Activated T-helper 2 cell treated with anti-CD3 and anti-CD28 coated beads, Interferon-gamma antibody, Interleukin-2, Interleukin-4, amounts not matched to agents 10 μg/mL and 5 μg/mL and 100 μg/mL, durations not matched to agents 14 hours and 24 hours and 36 hours (primary cell): ENCODE measurements at regions of chr5 and their contacts with region 1.

Region 1: DNA sequence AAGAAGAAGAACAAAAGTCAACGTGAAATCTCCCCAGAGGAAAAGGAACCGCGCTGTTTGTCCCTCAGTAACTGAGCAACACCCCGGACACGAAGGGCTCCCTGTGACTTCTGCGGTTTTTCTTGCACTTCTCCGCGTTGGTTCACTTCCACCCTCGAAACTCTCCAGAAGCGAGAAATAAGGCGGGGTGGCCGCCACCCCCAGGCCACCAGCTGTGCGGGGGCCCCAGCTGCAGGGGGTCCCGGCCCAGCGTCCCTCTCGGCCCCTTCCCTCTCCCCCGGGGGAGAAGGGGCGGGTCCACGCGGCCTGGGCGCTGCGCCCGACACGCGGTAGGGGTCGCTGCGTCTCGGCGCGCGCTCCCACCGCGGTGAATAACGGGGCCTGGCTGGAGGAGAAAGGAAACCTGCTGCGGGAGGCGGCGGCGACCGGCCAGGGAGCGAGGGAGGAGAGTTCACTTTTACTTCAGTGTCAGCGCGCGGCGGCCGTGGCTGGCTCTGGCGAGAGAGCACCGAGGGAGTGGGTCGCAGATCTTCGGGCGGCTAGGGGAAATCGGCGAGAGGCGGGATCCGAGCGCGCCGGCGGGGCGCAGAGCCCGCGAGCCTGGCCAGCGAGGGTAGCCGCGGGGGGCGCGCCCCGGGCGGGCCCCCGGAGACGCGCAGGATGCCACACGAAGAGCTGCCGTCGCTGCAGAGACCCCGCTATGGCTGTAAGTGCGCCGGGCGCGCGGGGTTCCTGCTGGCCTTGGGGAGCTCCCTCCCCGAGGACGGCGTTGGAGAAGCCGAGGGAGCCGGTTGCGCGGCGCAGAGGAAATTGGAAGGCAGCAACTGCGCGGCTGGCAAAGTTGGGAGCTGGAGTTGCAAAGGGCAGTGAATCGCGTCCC is at the start of gene IQGAP2:
- DNase-seq: peak; percentile 80
- H3K4me3 Mint-ChIP-seq: peak within 1 kb of the TSS; percentile 95
- H3K27ac Mint-ChIP-seq: peak within 1 kb of the TSS; percentile 94
- H3K4me1 Mint-ChIP-seq: peaks cover 43% of the 10 kb centered on the region
- H3K27me3 Mint-ChIP-seq: peaks cover 14% of the 10 kb centered on the region
- total RNA-seq, gene IQGAP2: 28.3 and 29.5 TPM in 2 replicates

Region 2: GRCh38 chr5:75566710-75567309 is 836.3 kb before region 1 on chr5:
- intact Hi-C with region 1: loop called (anchors 5 kb)
- DNase-seq: peak; percentile 30
- H3K4me3 Mint-ChIP-seq: peak overlapping the region; percentile 20
- H3K27ac Mint-ChIP-seq: peak overlapping the region; percentile 96
- H3K4me1 Mint-ChIP-seq: peaks cover 43% of the 10 kb centered on the region
- H3K27me3 Mint-ChIP-seq: no peaks in the 10 kb centered on the region

Region 3: DNA sequence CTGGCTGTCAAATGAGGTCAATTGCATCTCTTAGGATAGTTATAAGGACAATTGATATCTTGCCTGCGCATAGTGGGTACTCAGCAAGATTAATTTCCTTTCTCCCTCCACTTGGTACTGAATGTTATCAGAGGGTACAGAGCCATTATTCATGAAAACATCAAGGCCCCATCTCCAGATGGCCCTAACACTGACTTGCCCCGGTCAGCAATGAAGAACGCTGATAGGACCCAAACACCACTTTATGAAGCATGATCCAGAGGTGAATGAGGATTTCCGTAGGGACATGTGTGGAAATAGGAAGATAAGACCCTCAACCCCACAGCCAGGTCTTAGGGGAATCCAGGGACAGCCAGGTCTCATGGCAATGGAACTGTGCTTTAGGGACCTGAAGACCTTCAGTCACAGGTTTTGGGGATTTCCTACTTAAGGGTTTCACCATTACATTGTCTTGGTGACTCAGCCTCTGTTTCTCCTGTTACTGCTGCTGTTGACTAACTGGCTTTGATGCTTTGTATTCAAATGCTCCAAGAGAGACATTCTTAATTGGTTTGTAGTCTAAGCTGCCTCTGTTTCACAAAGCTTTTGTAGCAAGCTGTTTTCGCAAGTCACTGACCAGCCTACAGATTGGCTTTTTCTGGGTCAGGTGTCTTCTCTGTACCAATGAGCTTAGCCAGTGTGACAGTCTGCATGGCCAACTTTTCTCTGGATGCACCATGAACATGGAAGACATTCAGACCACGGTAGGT is 35.3 kb before region 1 on chr5:
- intact Hi-C with region 1: loop called (anchors 1 kb)
- DNase-seq: no peak
- H3K4me3 Mint-ChIP-seq: no peak overlapping the region
- H3K27ac Mint-ChIP-seq: peak overlapping the region; percentile 55
- H3K4me1 Mint-ChIP-seq: peaks cover 10% of the 10 kb centered on the region
- H3K27me3 Mint-ChIP-seq: peaks cover 2% of the 10 kb centered on the region

Region 4: GRCh38 chr5:76386360-76386759 is 16.8 kb before region 1 on chr5:
- intact Hi-C with region 1: no loop called
- DNase-seq: no peak
- H3K4me3 Mint-ChIP-seq: no peak overlapping the region
- H3K27ac Mint-ChIP-seq: no peak overlapping the region
- H3K4me1 Mint-ChIP-seq: peaks cover 28% of the 10 kb centered on the region
- H3K27me3 Mint-ChIP-seq: peaks cover 2% of the 10 kb centered on the region

Region 5: DNA sequence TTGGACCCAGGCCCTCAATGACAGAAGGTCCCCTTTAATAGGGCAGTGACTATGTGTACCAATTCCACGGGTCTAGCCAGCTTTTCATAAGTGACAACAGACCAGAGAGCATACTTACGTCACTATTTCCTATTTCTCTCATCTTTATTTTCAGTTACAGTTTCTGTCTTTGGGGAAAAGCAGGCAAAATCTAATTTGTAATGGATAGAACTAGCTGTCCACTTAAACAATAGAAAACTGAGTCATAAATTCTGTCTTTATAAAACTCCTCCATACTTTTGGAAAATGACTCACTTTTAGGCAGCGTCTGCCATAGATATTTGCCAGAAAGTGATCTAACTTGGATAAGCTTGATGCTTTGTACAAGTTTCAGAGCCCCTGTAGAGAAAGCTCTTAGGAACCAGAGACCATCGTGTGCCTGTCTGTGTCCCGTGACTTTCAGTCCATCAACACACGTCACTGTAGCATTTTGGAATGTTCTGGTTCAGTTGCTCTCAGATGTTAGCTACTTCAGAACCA is 118.2 kb after region 1 on chr5:
- intact Hi-C with region 1: loop called (anchors 1 kb)
- DNase-seq: no peak
- H3K4me3 Mint-ChIP-seq: peak overlapping the region; percentile 24
- H3K27ac Mint-ChIP-seq: peak overlapping the region; percentile 82
- H3K4me1 Mint-ChIP-seq: peaks cover 49% of the 10 kb centered on the region
- H3K27me3 Mint-ChIP-seq: no peaks in the 10 kb centered on the region

Region 6: GRCh38 chr5:76553251-76553650 is 150.1 kb after region 1 on chr5:
- intact Hi-C with region 1: no loop called
- DNase-seq: no peak
- H3K4me3 Mint-ChIP-seq: no peak overlapping the region
- H3K27ac Mint-ChIP-seq: no peak overlapping the region
- H3K4me1 Mint-ChIP-seq: peaks cover 43% of the 10 kb centered on the region
- H3K27me3 Mint-ChIP-seq: no peaks in the 10 kb centered on the region

Region 7: GRCh38 chr5:76641514-76642120 is 238.5 kb after region 1 on chr5:
- intact Hi-C with region 1: loop called (anchors 5 kb)
- DNase-seq: peak; percentile 37
- H3K4me3 Mint-ChIP-seq: no peak overlapping the region
- H3K27ac Mint-ChIP-seq: no peak overlapping the region
- H3K4me1 Mint-ChIP-seq: peaks cover 8% of the 10 kb centered on the region
- H3K27me3 Mint-ChIP-seq: no peaks in the 10 kb centered on the region

Region 8: GRCh38 chr5:77379558-77380061 is 976.5 kb after region 1 on chr5:
- intact Hi-C with region 1: loop called (anchors 10 kb)
- DNase-seq: peak; percentile 38
- H3K4me3 Mint-ChIP-seq: no peak overlapping the region
- H3K27ac Mint-ChIP-seq: peak overlapping the region; percentile 68
- H3K4me1 Mint-ChIP-seq: peaks cover 34% of the 10 kb centered on the region
- H3K27me3 Mint-ChIP-seq: no peaks in the 10 kb centered on the region